ENCODE measurements at regions of chr17 and their contacts with region 1.

Region 1: DNA sequence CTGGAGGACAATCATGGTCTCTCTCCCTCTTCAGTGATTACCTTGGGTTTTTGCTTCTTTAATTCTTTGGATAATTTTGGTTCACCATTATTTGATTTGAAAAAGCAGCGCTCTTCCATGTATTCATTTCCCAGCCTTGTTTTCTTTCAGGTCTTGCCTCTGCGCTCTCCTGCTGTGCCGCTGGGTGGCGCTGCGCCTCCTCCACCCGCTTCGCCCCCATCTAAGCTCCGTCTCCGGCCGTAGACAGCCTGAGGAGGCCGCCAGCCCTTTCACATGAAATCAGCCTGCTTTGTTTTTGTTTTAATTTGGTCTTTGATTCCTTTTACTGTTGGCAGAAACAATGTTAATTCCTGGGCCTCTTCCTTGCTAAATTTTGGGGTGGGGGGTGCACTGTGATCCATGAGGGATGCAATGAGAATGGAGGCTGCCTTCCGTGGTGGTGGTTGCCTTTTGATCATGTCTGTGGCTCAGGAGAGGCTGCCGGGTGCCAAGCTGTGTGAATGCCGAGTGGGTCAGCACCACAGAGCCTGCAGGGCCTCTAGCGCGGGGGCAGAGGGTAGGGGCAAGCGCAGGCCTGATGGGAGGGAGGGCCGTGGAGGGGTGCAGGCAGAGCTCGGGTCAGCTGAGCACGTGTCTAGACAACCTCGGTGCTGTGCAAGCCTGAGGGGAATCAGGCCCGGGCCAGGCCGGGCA is 64.1 kb downstream of the PLD6 start:
- DNase-seq: no peak
- ATAC-seq: no peak
- H3K4me3 Mint-ChIP-seq: no peak overlapping the region
- H3K27ac Mint-ChIP-seq: no peak overlapping the region
- H3K4me1 Mint-ChIP-seq: peaks cover 3% of the 10 kb centered on the region
- H3K27me3 Mint-ChIP-seq: no peaks in the 10 kb centered on the region
- CTCF ChIP-seq: no peak

Region 2: DNA sequence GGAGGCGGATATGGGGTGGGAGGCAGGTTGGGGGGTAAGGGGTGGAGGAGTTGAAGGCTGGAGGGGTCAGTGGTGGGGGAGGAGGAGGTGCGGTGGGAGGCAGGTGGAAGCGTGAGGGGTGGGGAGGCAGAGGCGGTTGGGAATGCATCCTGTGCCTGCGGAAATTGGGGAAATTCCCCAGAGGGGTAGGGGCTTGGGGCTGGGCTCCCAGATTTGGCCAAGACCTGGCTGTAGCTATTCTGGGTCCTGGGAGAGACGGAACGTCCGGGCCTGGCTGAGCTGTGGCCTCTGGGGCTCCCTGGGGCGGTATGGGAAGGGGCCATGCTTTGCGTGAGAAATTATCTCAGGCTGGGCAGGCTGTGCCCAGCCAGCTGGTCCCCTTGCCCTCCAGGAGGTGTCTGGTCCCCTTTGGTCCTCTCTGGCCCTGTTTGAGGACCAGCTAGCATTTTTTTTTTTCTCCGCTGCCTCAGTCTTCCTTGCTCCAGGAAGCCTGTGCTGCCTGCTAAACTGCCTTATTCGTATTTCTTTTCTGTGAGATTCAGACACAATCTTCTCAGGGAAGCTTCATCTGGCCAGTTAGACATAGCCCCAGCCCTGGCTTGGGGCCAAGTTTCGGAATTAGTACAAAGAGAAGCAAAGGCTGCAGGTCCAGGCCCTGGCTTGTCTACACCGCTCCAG is 734.0 kb before region 1 on chr17:
- CTCF ChIA-PET with region 1: no interaction called
- POLR2A ChIA-PET with region 1: no interaction called
- intact Hi-C with region 1: no loop called
- DNase-seq: peak; percentile 34
- ATAC-seq: peak; percentile 85
- H3K4me3 Mint-ChIP-seq: peak overlapping the region; percentile 36
- H3K27ac Mint-ChIP-seq: no peak overlapping the region
- H3K4me1 Mint-ChIP-seq: peaks cover 19% of the 10 kb centered on the region
- H3K27me3 Mint-ChIP-seq: peaks cover 15% of the 10 kb centered on the region
- CTCF ChIP-seq: no peak

Region 3: GRCh38 chr17:17297217-17297616 is 155.2 kb after region 1 on chr17:
- CTCF ChIA-PET with region 1: no interaction called
- POLR2A ChIA-PET with region 1: interaction called, 11 read pairs
- intact Hi-C with region 1: no loop called
- DNase-seq: no peak
- ATAC-seq: no peak
- H3K4me3 Mint-ChIP-seq: no peak overlapping the region
- H3K27ac Mint-ChIP-seq: no peak overlapping the region
- H3K4me1 Mint-ChIP-seq: peaks cover 9% of the 10 kb centered on the region
- H3K27me3 Mint-ChIP-seq: no peaks in the 10 kb centered on the region
- CTCF ChIP-seq: no peak

Region 4: GRCh38 chr17:17313350-17313991 is 171.5 kb after region 1 on chr17:
- CTCF ChIA-PET with region 1: no interaction called
- POLR2A ChIA-PET with region 1: no interaction called
- intact Hi-C with region 1: loop called (anchors 10 kb)
- DNase-seq: peak; percentile 38
- ATAC-seq: peak; percentile 97
- H3K4me3 Mint-ChIP-seq: no peak overlapping the region
- H3K27ac Mint-ChIP-seq: no peak overlapping the region
- H3K4me1 Mint-ChIP-seq: no peaks in the 10 kb centered on the region
- H3K27me3 Mint-ChIP-seq: no peaks in the 10 kb centered on the region
- CTCF ChIP-seq: no peak

Measured in activated B cell treated with CpG ODN at 0.5 μM for 24 hours (primary cell).